Thyroid gland (tissue), 4 donors: ENCODE measurements at regions of chr2 and their contacts with region 1.

Region 1: DNA sequence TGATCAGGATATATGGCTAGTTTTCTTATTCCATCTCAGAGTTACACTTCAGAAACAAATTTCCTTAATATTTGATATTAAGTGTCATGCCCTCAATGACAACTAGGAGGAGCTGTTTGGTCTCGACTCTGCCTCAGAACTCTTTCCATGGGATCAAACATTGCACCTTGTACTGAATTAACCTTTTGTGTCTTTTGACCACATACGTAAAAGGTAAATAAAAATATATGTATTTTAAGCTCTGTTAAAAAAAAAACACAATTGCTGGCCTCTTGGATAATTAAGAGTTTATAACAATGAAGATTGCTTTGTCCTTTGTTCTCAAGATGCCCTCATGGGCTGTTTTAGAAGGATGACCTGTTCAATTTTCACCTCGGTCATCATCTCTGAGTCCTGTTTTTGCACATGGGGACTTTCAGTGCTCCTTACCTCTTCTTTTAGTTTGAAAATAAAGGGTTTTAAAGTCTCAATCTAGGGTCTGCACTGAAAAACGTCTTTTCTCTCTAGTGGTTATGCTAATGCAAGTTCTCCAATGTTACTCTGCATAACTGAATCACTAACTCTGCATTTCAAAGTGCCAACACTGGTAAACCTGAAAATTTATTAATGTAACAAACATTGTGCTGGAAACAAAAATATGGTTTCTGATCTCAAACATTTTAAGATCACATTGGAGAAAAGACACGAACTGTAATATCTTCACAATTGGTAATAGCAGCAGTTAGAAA is 18.8 kb upstream of the FN1 start:
- DNase-seq: no peak
- H3K4me3 ChIP-seq: no peak overlapping the region
- H3K27ac ChIP-seq: no peak overlapping the region
- H3K4me1 ChIP-seq: no peaks in the 10 kb centered on the region
- H3K27me3 ChIP-seq: no peaks in the 10 kb centered on the region
- CTCF ChIP-seq: peak; percentile 44 to 84 (median 70)
- POLR2A ChIP-seq: no peak

Region 2: GRCh38 chr2:215354771-215355695 is 99.7 kb before region 1 on chr2:
- intact Hi-C with region 1: no loop called
- DNase-seq: no peak
- H3K4me3 ChIP-seq: no peak overlapping the region
- H3K27ac ChIP-seq: no peak overlapping the region
- H3K4me1 ChIP-seq: no peaks in the 10 kb centered on the region
- H3K27me3 ChIP-seq: no peaks in the 10 kb centered on the region
- CTCF ChIP-seq: no peak
- POLR2A ChIP-seq: no peak

Region 3: DNA sequence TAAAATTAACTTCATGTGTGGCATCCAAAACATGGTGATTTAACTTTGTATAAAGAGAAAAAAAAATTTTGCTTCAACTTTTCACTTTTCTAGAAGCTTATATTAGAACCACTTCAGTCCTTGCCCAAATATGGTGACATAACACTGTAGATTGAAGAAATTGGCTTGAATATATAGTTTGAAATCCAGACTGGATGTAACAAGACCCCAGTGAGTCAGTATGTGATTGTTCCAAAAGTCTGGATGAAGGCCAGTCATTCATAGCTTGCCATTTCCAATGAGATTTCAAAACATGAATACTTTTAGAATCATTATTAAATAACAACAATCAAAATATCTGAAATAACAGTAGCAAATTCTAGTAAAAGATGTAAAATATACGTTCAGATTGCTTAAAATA is 86.0 kb after region 1 on chr2:
- intact Hi-C with region 1: no loop called
- DNase-seq: no peak
- H3K4me3 ChIP-seq: no peak overlapping the region
- H3K27ac ChIP-seq: no peak overlapping the region
- H3K4me1 ChIP-seq: no peaks in the 10 kb centered on the region
- H3K27me3 ChIP-seq: no peaks in the 10 kb centered on the region
- CTCF ChIP-seq: no peak
- POLR2A ChIP-seq: no peak

Region 4: GRCh38 chr2:215590010-215590745 is 135.5 kb after region 1 on chr2:
- intact Hi-C with region 1: no loop called
- DNase-seq: no peak
- H3K4me3 ChIP-seq: no peak overlapping the region
- H3K27ac ChIP-seq: no peak overlapping the region
- H3K4me1 ChIP-seq: no peaks in the 10 kb centered on the region
- H3K27me3 ChIP-seq: no peaks in the 10 kb centered on the region
- CTCF ChIP-seq: no peak
- POLR2A ChIP-seq: no peak

Region 5: GRCh38 chr2:215830304-215830703 is 375.6 kb after region 1 on chr2:
- intact Hi-C with region 1: loop called (anchors 10 kb)
- DNase-seq: peak; percentile 4 to 19
- H3K4me3 ChIP-seq: no peak overlapping the region
- H3K27ac ChIP-seq: no peak overlapping the region
- H3K4me1 ChIP-seq: no peaks in the 10 kb centered on the region
- H3K27me3 ChIP-seq: no peaks in the 10 kb centered on the region
- CTCF ChIP-seq: no peak
- POLR2A ChIP-seq: no peak

Region 6: GRCh38 chr2:215917953-215918620 is 463.4 kb after region 1 on chr2:
- intact Hi-C with region 1: loop called (anchors 5 kb)
- DNase-seq: no peak
- H3K4me3 ChIP-seq: no peak overlapping the region
- H3K27ac ChIP-seq: no peak overlapping the region
- H3K4me1 ChIP-seq: peaks cover 0 to 8% of the 10 kb centered on the region in 2 donors
- H3K27me3 ChIP-seq: no peaks in the 10 kb centered on the region
- CTCF ChIP-seq: no peak
- POLR2A ChIP-seq: no peak